Activated T-helper 1 cell treated with anti-CD3 and anti-CD28 coated beads, Interleukin-12 subunit alpha, Interleukin-12 subunit beta, Interleukin-2, Interleukin-4 antibody, amounts not matched to agents 30 ng/mL and 10 ng/mL and 1 ng/mL, durations not matched to agents 14 hours and 24 hours and 36 hours (primary cell): ENCODE measurements at regions of chr1 and their contacts with region 1.

Region 1: GRCh38 chr1:205616563-205617293 is 15.1 kb downstream of the ELK4 start:
- DNase-seq: no peak
- H3K4me3 Mint-ChIP-seq: no peak overlapping the region
- H3K27ac Mint-ChIP-seq: no peak overlapping the region
- H3K4me1 Mint-ChIP-seq: peaks cover 32% of the 10 kb centered on the region
- H3K27me3 Mint-ChIP-seq: no peaks in the 10 kb centered on the region

Region 2: GRCh38 chr1:204411451-204412204 is 1205.1 kb before region 1 on chr1 and contains the start of gene PPP1R15B:
- intact Hi-C with region 1: no loop called
- DNase-seq: peak; percentile 98
- H3K4me3 Mint-ChIP-seq: peak within 1 kb of the TSS; percentile 99
- H3K27ac Mint-ChIP-seq: peak within 1 kb of the TSS; percentile 99
- H3K4me1 Mint-ChIP-seq: peaks cover 12% of the 10 kb centered on the region
- H3K27me3 Mint-ChIP-seq: no peaks in the 10 kb centered on the region
- total RNA-seq, gene PPP1R15B: 75.8 and 76.2 TPM in 2 replicates

Region 3: GRCh38 chr1:205488086-205488723 is 128.5 kb before region 1 on chr1:
- intact Hi-C with region 1: no loop called
- DNase-seq: peak; percentile 31
- H3K4me3 Mint-ChIP-seq: no peak overlapping the region
- H3K27ac Mint-ChIP-seq: no peak overlapping the region
- H3K4me1 Mint-ChIP-seq: peaks cover 8% of the 10 kb centered on the region
- H3K27me3 Mint-ChIP-seq: peaks cover 44% of the 10 kb centered on the region

Region 4: GRCh38 chr1:205600085-205600484 is 16.6 kb before region 1 on chr1:
- intact Hi-C with region 1: loop called (anchors 2 kb)
- DNase-seq: no peak
- H3K4me3 Mint-ChIP-seq: no peak overlapping the region
- H3K27ac Mint-ChIP-seq: peak overlapping the region; percentile 66
- H3K4me1 Mint-ChIP-seq: peaks cover 14% of the 10 kb centered on the region
- H3K27me3 Mint-ChIP-seq: no peaks in the 10 kb centered on the region

Region 5: DNA sequence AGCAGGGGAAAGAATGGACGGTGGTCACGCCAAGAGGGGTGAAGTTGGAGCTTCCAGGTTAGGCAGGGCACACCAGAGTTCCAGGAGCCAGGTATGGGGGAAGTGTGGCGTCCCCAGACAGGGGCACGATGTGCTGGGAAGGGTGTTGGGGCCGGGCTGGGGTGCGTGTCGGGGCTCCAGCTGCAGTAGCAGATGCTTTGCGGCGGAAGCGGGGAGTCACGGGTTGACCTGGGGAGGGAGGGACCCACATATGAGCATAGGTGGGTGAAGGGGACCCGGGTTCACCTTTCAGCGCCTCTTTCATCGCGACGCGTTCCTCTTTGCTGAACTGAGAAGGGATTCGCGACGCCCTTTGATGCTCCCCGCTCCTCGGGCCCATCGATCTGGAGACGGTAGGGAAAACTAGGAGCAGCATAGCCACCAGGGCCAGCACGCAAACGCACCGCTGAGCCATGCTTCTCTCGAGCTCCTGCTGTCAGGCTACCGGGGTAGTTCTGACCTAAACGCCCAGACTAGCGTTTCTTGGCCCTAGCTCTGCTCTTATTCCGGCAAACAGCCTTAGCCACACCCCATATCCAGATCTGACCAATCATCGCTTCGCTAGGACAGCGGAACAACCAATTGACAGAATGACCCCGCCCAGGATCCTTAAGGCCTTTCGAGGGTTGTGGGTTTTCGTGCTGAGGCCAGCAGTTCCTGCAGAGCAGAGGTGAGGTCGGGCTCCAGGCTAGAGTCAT is 233.1 kb after region 1 on chr1 and contains the start of gene PM20D1:
- intact Hi-C with region 1: no loop called
- DNase-seq: peak; percentile 86
- H3K4me3 Mint-ChIP-seq: peak within 1 kb of the TSS; percentile 89
- H3K27ac Mint-ChIP-seq: peak within 1 kb of the TSS; percentile 85
- H3K4me1 Mint-ChIP-seq: peaks cover 23% of the 10 kb centered on the region
- H3K27me3 Mint-ChIP-seq: peaks cover 8% of the 10 kb centered on the region
- total RNA-seq, gene PM20D1: 0.29 and 0.39 TPM in 2 replicates

Region 6: GRCh38 chr1:206001476-206001888 is 384.8 kb after region 1 on chr1:
- intact Hi-C with region 1: no loop called
- DNase-seq: no peak
- H3K4me3 Mint-ChIP-seq: no peak overlapping the region
- H3K27ac Mint-ChIP-seq: peak overlapping the region; percentile 10
- H3K4me1 Mint-ChIP-seq: peaks cover 37% of the 10 kb centered on the region
- H3K27me3 Mint-ChIP-seq: peaks cover 2% of the 10 kb centered on the region